ENCODE measurements at regions of chr7 and their contacts with region 1.

Region 1: DNA sequence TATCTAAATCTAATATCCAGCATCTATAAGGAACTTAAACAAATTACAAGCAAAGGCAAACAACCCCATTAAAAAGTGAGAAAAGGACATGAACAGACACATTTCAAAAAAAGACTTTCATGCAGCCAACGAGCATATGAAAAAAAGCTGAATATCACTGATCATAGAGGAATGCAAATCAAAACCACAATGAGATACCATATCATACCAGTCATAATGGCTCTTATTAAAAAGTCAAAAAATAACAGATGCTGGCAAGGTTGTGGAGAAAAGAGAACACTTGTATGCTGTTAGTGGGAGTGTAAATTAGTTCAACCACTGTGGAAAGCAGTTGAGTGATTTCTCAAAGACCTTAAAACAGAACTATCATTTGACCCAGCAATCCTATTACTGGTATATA is 334.4 kb upstream of the CACNA2D1 start:
- DNase-seq: no peak
- H3K4me3 Mint-ChIP-seq: no peak overlapping the region
- H3K27ac Mint-ChIP-seq: no peak overlapping the region
- H3K4me1 Mint-ChIP-seq: no peaks in the 10 kb centered on the region
- H3K27me3 Mint-ChIP-seq: no peaks in the 10 kb centered on the region

Region 2: GRCh38 chr7:84425702-84426259 is 1647.8 kb after region 1 on chr7:
- intact Hi-C with region 1: loop called (anchors 10 kb)
- DNase-seq: no peak
- H3K4me3 Mint-ChIP-seq: no peak overlapping the region
- H3K27ac Mint-ChIP-seq: no peak overlapping the region
- H3K4me1 Mint-ChIP-seq: no peaks in the 10 kb centered on the region
- H3K27me3 Mint-ChIP-seq: no peaks in the 10 kb centered on the region

Measured in activated T-helper 1 cell treated with anti-CD3 and anti-CD28 coated beads, Interleukin-12 subunit alpha, Interleukin-12 subunit beta, Interleukin-2, Interleukin-4 antibody, amounts not matched to agents 30 ng/mL and 10 ng/mL and 1 ng/mL, durations not matched to agents 14 hours and 24 hours and 36 hours (primary cell).